BJ (cell line): ENCODE measurements at regions of chr5 and their contacts with region 1.

Region 1: DNA sequence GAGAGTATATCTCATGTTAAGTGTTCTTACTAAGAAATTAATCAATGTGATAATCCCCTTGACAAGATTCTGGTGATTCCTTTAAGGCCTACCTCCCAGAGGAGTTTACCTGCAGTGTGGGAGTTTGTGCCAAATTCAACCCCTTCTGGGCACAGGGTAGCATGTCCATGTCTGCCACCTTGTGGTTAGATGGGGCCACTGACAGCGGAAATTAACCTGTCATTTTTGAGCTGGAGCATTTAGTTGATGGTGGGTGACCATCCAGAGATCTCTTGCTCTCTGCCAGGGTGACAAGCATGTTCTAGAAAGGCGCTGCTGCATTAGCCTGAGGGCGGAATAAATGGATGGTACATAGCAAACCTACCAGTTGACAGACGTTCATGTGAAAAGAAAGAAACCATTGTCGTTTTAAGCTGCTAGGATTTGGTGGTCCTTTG is 132.2 kb downstream of the FBXO4 start:
- DNase-seq: no peak
- H3K4me3 ChIP-seq: no peak overlapping the region
- H3K27me3 ChIP-seq: no peaks in the 10 kb centered on the region
- CTCF ChIP-seq: peak; percentile 76

Region 2: GRCh38 chr5:41856644-41857491 is 200.4 kb before region 1 on chr5:
- CTCF ChIA-PET with region 1: interaction called, 107 read pairs
- POLR2A ChIA-PET with region 1: no interaction called
- DNase-seq: no peak
- H3K4me3 ChIP-seq: no peak overlapping the region
- H3K27me3 ChIP-seq: no peaks in the 10 kb centered on the region
- CTCF ChIP-seq: peak; percentile 69

Region 3: DNA sequence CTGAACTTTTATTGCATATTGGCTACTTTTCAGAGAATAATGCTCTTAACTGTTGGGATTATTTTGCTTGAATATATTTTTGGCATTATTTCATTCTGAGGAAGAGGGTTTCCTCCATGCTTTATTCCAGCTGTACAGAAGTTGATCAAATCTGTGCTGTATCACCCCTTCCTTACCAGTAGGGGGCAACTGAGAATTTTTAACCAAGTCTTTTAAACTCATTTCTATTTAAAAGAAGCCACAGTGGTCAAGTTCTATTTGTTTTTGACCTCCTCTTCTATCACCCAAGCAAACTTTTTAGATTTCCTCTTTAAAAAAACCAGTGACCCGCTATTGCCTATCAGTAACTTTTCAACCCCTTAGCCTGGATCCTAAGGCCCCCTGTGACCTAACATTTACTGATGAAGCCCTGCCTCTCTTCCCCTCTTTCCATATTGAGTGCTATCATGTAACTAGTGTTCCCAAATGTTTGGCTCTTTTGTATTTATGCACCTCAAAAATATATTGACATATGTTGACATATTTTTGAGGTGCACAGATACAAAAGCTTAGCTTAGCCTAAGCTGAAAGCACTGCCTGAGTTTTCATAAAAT is 51.6 kb before region 1 on chr5:
- CTCF ChIA-PET with region 1: interaction called, 16 read pairs
- POLR2A ChIA-PET with region 1: no interaction called
- DNase-seq: no peak
- H3K4me3 ChIP-seq: no peak overlapping the region
- H3K27me3 ChIP-seq: no peaks in the 10 kb centered on the region
- CTCF ChIP-seq: peak; percentile 79

Region 4: DNA sequence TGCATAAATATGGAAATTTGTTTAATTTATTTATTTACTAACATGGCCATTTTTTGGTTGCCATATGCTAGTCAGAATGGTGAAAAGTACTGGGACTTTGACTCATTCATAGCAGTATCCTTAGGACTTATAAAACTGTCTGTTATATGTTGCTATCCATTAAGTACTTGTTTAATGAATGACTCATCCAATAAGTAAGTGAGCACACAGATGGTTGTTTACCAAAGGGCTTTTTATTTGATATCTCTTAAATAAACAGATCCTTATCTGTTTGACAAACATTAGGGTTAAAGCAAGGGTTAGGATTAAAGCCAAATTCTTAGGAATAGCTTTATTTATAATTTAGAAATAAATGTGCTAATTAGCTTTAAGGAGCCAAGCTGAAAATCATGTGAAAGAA is 51.2 kb after region 1 on chr5:
- CTCF ChIA-PET with region 1: no interaction called
- POLR2A ChIA-PET with region 1: no interaction called
- DNase-seq: no peak
- H3K4me3 ChIP-seq: no peak overlapping the region
- H3K27me3 ChIP-seq: no peaks in the 10 kb centered on the region
- CTCF ChIP-seq: no peak

Region 5: DNA sequence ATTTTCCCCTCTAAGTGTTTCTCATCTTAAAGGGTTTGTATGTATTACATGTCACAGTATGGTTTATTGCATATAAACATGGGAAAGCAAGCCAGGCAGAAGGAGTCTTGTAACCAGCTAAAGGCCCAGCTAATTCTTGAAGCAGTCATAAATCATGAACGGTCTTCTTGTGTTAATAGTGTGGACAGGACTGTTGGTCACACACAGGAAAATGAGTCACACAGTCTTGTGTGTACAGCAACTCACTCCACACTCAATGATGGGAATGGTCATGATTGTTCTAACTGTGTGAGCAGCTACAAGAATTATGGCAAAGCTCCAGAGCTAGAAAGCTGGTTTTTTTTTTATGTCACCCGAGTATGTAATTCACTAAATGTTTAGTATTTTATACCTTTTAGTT is 489.9 kb after region 1 on chr5:
- CTCF ChIA-PET with region 1: no interaction called
- POLR2A ChIA-PET with region 1: no interaction called
- DNase-seq: no peak
- H3K4me3 ChIP-seq: no peak overlapping the region
- H3K27me3 ChIP-seq: no peaks in the 10 kb centered on the region
- CTCF ChIP-seq: no peak